CD8-positive, alpha-beta T cell (primary cell): ENCODE measurements at regions of chr1 and their contacts with region 1.

Region 1: GRCh38 chr1:111190651-111191451 is 9.6 kb downstream of the DENND2D start:
- DNase-seq: no peak
- ATAC-seq: no peak
- H3K4me3 ChIP-seq: no peak overlapping the region
- H3K4me3 Mint-ChIP-seq: peak overlapping the region; percentile 47
- H3K27ac ChIP-seq: peak overlapping the region in 1 of 2 experiments; percentile 84
- H3K27ac Mint-ChIP-seq: peak overlapping the region; percentile 97
- H3K4me1 ChIP-seq: peaks cover 100% of the 10 kb centered on the region
- H3K4me1 Mint-ChIP-seq: peaks cover 99% of the 10 kb centered on the region
- H3K27me3 ChIP-seq: no peaks in the 10 kb centered on the region
- H3K27me3 Mint-ChIP-seq: no peaks in the 10 kb centered on the region
- CTCF ChIP-seq: no peak

Region 2: GRCh38 chr1:110630839-110631663 is 559.8 kb before region 1 on chr1:
- CTCF ChIA-PET with region 1: no interaction called
- POLR2A ChIA-PET with region 1: no interaction called
- intact Hi-C with region 1: no loop called
- DNase-seq: peak; percentile 66 to 94 (median 85)
- ATAC-seq: peak; percentile 72
- H3K4me3 ChIP-seq: peak overlapping the region; percentile 27
- H3K4me3 Mint-ChIP-seq: no peak overlapping the region
- H3K27ac ChIP-seq: peak overlapping the region; percentile 28 to 55
- H3K27ac Mint-ChIP-seq: no peak overlapping the region
- H3K4me1 ChIP-seq: peaks cover 55% of the 10 kb centered on the region
- H3K4me1 Mint-ChIP-seq: peaks cover 46% of the 10 kb centered on the region
- H3K27me3 ChIP-seq: no peaks in the 10 kb centered on the region
- H3K27me3 Mint-ChIP-seq: no peaks in the 10 kb centered on the region
- CTCF ChIP-seq: peak; percentile 70

Region 3: GRCh38 chr1:111176678-111177077 is 14.2 kb before region 1 on chr1:
- CTCF ChIA-PET with region 1: interaction called, 6 read pairs
- POLR2A ChIA-PET with region 1: interaction called, 31 read pairs
- intact Hi-C with region 1: loop called in 1 of 2 experiments (anchors 2 kb)
- DNase-seq: no peak
- ATAC-seq: no peak
- H3K4me3 ChIP-seq: no peak overlapping the region
- H3K4me3 Mint-ChIP-seq: no peak overlapping the region
- H3K27ac ChIP-seq: no peak overlapping the region
- H3K27ac Mint-ChIP-seq: no peak overlapping the region
- H3K4me1 ChIP-seq: peaks cover 27% of the 10 kb centered on the region
- H3K4me1 Mint-ChIP-seq: peaks cover 67% of the 10 kb centered on the region
- H3K27me3 ChIP-seq: no peaks in the 10 kb centered on the region
- H3K27me3 Mint-ChIP-seq: no peaks in the 10 kb centered on the region
- CTCF ChIP-seq: no peak

Region 4: DNA sequence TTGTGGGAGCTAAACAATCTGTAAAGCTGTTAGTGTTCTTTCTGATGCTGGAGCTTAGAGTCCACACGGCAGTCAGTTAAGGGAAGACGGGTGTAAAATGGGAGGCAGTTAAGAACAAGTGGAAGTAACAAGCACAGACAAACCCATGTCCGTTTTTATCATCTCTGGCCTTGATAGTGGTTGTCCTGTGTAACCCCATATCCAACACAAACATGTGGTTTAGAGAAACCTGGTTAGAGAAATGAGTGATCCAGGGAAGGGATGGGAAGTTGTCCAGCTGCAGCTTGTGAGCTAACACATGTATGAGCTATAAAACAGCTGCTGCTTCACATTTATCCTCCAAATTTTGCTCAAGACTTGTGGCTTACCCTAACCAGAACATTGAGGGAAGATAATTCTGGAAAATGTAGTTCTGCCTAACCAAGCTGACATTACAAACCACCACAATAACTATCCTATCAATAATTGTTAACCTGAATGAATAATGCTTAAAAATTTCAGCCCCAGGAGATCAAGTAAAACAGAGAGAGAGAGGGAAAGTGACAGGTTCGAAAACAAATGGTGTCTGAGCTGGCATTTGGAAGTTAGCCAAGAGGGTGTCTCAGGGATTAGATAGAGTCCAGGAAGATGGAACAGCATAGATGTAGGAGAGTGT is 272.3 kb after region 1 on chr1:
- CTCF ChIA-PET with region 1: no interaction called
- POLR2A ChIA-PET with region 1: no interaction called
- intact Hi-C with region 1: no loop called
- DNase-seq: no peak
- ATAC-seq: no peak
- H3K4me3 ChIP-seq: no peak overlapping the region
- H3K4me3 Mint-ChIP-seq: no peak overlapping the region
- H3K27ac ChIP-seq: no peak overlapping the region
- H3K27ac Mint-ChIP-seq: no peak overlapping the region
- H3K4me1 ChIP-seq: no peaks in the 10 kb centered on the region
- H3K4me1 Mint-ChIP-seq: peaks cover 26% of the 10 kb centered on the region
- H3K27me3 ChIP-seq: no peaks in the 10 kb centered on the region
- H3K27me3 Mint-ChIP-seq: no peaks in the 10 kb centered on the region
- CTCF ChIP-seq: no peak